ENCODE measurements at regions of chr19 and their contacts with region 1.

Region 1: GRCh38 chr19:3586124-3586626 is 897 bp downstream of the GIPC3 start:
- DNase-seq: peak; percentile 60
- ATAC-seq: peak; percentile 36
- H3K4me3 ChIP-seq: peak overlapping the region in 4 of 5 experiments; percentile 37 to 51 (median 42)
- H3K4me3 Mint-ChIP-seq: peak overlapping the region; percentile 66
- H3K27ac ChIP-seq: no peak overlapping the region
- H3K27ac Mint-ChIP-seq: no peak overlapping the region
- H3K4me1 ChIP-seq: peaks cover 8 to 12% of the 10 kb centered on the region in 2 donors
- H3K4me1 Mint-ChIP-seq: no peaks in the 10 kb centered on the region
- H3K27me3 ChIP-seq: peaks cover 0 to 13% (median 6%) of the 10 kb centered on the region in 4 experiments
- H3K27me3 Mint-ChIP-seq: no peaks in the 10 kb centered on the region
- CTCF ChIP-seq: peak; percentile 69

Region 2: DNA sequence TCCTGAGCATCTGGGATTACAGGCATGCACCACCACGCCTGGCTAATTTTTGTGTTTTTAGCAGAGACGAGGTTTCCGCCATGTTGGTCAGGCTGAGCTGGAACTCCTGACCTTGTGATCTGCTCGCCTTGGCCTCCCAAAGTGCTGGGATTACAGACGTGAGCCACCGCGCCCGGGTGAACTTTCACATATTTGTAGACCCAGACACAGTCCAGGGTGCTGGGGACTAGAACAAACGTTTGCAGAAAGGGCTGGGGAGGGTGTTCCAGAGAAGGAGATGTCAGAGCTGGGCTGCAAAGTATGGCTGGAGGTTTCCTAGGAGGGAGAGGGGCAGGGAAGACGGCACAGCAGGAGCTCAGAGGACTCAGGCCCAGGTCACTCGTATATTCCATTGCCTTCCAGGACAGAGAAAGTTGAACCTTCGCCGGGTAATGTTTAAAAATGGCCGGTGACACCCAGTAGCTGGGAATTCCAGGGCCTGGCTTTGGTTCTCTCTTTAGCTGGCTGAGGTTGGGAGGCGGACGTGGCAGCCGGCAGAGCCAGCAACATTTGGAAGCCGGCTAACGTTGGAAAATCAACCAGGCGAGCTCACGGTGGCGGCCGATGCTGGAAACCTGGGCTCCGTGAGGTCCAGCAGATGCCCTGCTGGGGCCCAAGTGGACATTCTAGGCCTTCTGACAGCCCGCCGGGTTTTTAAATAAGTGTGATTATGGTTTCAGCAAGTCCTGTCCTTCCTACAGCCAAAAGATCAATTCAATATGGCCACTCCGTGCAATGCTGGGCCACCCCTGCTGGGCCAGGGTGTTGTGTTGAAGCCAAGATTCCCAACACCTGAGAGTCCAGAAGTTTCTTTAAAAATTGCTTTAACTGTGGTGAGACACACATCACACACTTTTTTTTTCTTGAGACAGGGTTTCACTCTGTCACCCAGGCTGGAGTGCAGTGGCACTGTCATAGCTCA is 178.3 kb before region 1 on chr19:
- CTCF ChIA-PET with region 1: no interaction called
- POLR2A ChIA-PET with region 1: no interaction called
- intact Hi-C with region 1: no loop called
- DNase-seq: no peak
- ATAC-seq: no peak
- H3K4me3 ChIP-seq: no peak overlapping the region
- H3K4me3 Mint-ChIP-seq: no peak overlapping the region
- H3K27ac ChIP-seq: no peak overlapping the region
- H3K27ac Mint-ChIP-seq: no peak overlapping the region
- H3K4me1 ChIP-seq: no peaks in the 10 kb centered on the region
- H3K4me1 Mint-ChIP-seq: no peaks in the 10 kb centered on the region
- H3K27me3 ChIP-seq: no peaks in the 10 kb centered on the region
- H3K27me3 Mint-ChIP-seq: no peaks in the 10 kb centered on the region
- CTCF ChIP-seq: no peak

Region 3: DNA sequence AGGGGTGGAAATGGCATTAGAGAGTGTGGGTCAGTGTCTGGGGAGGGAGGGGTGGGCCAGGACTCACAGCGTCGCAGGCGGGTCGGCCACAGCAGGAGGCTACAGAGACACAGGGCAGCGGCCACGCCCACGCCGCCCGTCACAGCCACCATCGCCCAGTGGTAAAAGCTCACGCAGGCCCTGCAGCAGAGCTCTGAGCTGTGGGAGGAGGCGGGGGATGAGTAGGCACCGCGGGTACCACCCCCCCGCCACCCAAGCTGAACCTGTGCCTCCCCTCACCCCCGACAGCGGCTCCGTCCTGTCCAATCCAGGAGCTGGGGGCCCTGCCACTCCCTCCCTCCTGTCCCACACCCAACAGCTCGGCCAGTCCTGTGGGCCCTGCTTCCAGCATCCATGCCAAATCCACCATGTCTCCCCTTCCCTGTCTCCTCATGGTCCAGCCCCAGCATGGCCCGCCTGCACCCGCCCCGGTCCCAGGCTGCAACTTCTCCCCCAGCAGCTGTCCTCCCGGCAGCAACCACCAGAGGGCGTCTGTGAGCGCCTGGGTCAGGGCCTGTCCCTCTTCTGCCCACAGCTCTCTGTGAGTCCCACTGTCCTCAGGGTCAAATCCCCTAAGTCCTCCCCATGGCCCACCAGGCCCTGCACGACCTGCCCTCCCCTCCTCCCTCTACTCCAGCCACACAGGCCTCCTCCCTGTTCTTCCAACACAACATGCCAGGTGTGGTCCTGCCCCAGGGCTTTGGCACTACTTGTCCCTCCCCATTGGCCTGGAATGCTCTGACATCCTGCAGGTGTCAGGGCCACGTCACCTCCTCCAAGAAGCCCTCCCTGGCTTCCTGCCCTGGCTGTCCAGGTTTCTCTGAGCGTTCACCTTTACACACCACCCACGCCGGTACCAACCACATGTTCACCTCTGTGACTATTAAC is 41.2 kb before region 1 on chr19:
- CTCF ChIA-PET with region 1: interaction called, 3 read pairs
- POLR2A ChIA-PET with region 1: interaction called, 12 read pairs
- intact Hi-C with region 1: no loop called
- DNase-seq: peak; percentile 78
- ATAC-seq: peak; percentile 78
- H3K4me3 ChIP-seq: no peak overlapping the region
- H3K4me3 Mint-ChIP-seq: no peak overlapping the region
- H3K27ac ChIP-seq: no peak overlapping the region
- H3K27ac Mint-ChIP-seq: peak overlapping the region; percentile 86
- H3K4me1 ChIP-seq: no peaks in the 10 kb centered on the region
- H3K4me1 Mint-ChIP-seq: peaks cover 8% of the 10 kb centered on the region
- H3K27me3 ChIP-seq: no peaks in the 10 kb centered on the region
- H3K27me3 Mint-ChIP-seq: no peaks in the 10 kb centered on the region
- CTCF ChIP-seq: peak; percentile 90